ENCODE measurements at regions of chr9 and their contacts with region 1.

Region 1: GRCh38 chr9:21559424-21560280 is 77.5 kb upstream of the IFNE start:
- DNase-seq: peak; percentile 30 to 71 (median 53)
- ATAC-seq: peak; percentile 87
- H3K4me3 ChIP-seq: peak overlapping the region; percentile 74
- H3K4me3 Mint-ChIP-seq: peak overlapping the region; percentile 88 to 99 (median 96)
- H3K27ac ChIP-seq: peak overlapping the region; percentile 67
- H3K27ac Mint-ChIP-seq: peak overlapping the region in 8 of 9 donors; percentile 34 to 76 (median 70)
- H3K4me1 ChIP-seq: peaks cover 0 to 21% of the 10 kb centered on the region in 2 donors
- H3K4me1 Mint-ChIP-seq: peaks cover 17 to 53% (median 28%) of the 10 kb centered on the region in 7 donors
- H3K27me3 ChIP-seq: peaks cover 9 to 31% of the 10 kb centered on the region in 2 donors
- H3K27me3 Mint-ChIP-seq: peaks cover 4 to 64% (median 41%) of the 10 kb centered on the region in 5 donors

Region 2: GRCh38 chr9:21102305-21102704 is 457.3 kb before region 1 on chr9:
- CTCF ChIA-PET with region 1: no interaction called
- POLR2A ChIA-PET with region 1: no interaction called
- intact Hi-C with region 1: no loop called
- DNase-seq: no peak
- ATAC-seq: no peak
- H3K4me3 ChIP-seq: no peak overlapping the region
- H3K4me3 Mint-ChIP-seq: no peak overlapping the region
- H3K27ac ChIP-seq: no peak overlapping the region
- H3K27ac Mint-ChIP-seq: no peak overlapping the region
- H3K4me1 ChIP-seq: peaks cover 2 to 3% of the 10 kb centered on the region in 2 donors
- H3K4me1 Mint-ChIP-seq: peaks cover 6 to 9% (median 8%) of the 10 kb centered on the region in 7 donors
- H3K27me3 ChIP-seq: no peaks in the 10 kb centered on the region
- H3K27me3 Mint-ChIP-seq: peaks cover 3 to 19% (median 5%) of the 10 kb centered on the region in 5 donors

Region 3: DNA sequence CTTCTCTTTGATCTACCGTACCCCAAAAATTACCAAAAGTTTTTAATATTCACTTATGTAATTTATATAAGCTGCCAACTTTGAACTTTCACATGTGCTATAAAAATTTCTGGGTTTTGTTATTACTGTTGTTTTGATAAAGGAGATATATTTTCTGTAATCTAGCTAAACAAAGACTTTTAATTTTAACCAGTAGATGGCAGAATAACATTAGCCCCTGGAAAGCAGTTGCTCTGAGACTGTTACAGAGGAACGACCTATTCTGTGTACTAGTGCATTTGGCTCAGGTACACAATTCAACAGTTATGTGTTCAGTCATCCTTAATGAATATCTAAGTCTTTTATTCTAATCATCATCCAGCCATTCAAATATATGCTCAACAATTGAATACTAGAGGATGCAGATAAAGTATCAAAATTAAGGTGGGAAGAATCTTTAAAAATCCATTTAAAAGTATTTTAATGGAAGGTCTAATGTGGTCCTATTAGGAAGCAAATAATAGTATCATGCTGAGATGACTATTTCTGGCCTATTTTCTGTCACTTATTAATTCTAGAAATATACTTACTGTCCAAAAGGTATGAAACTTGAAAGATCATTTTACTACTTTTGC is 233.0 kb before region 1 on chr9:
- CTCF ChIA-PET with region 1: interaction called, 3 read pairs
- POLR2A ChIA-PET with region 1: no interaction called
- intact Hi-C with region 1: loop called in 1 of 2 experiments (anchors 5 kb)
- DNase-seq: peak in 7 of 9 donors; percentile 31 to 67 (median 56)
- ATAC-seq: peak; percentile 95
- H3K4me3 ChIP-seq: no peak overlapping the region
- H3K4me3 Mint-ChIP-seq: peak overlapping the region in 4 of 10 donors; percentile 17 to 62 (median 40)
- H3K27ac ChIP-seq: no peak overlapping the region
- H3K27ac Mint-ChIP-seq: peak overlapping the region in 3 of 9 donors; percentile 17 to 73 (median 35)
- H3K4me1 ChIP-seq: peaks cover 10 to 23% of the 10 kb centered on the region in 2 donors
- H3K4me1 Mint-ChIP-seq: peaks cover 32 to 67% (median 55%) of the 10 kb centered on the region in 7 donors
- H3K27me3 ChIP-seq: no peaks in the 10 kb centered on the region
- H3K27me3 Mint-ChIP-seq: no peaks in the 10 kb centered on the region

Region 4: DNA sequence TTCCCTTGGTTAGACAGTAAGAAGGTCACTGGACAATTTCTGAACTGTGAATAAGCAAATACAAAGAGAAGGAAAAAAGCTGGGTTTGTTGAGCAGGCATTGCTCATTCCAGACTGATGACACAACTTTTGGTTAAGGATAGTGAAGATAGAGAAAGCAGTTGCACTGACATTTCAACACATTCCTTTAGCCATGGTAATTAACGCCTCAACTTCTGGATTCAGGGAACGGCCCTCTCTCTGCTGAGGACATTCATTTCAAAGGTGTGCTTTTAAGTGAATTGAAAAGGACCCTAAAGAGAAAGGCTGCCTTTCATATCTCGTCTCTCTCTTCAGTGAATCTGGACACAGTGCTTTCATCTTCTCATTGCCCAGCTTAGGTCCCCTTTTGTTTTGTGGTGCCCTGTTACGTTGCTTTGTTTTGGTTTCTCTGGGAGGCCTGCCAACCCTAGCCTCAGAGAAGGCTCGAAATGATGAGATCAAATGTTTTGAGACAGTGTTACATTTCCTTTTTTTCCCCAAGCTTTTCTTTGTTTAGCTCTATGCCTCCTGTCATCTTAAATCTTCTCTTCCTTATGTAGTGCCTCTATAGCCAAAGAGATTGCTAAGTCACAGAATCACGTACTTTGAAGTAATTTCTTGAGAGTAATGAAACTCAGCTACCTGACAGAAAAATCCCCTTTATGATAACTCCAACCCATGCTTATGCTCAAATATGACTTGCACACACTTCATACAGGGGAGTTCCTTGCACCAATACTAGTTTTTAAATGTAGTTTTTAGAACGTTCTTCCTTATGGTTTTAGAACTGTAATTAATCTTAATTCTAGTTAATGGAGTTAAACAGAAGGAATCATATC is 16.9 kb after region 1 on chr9:
- CTCF ChIA-PET with region 1: interaction called, 6 read pairs
- POLR2A ChIA-PET with region 1: interaction called, 22 read pairs
- intact Hi-C with region 1: loop called (anchors 1 kb)
- DNase-seq: peak in 7 of 9 donors; percentile 44 to 80 (median 60)
- ATAC-seq: peak; percentile 69
- H3K4me3 ChIP-seq: no peak overlapping the region
- H3K4me3 Mint-ChIP-seq: peak overlapping the region; percentile 3 to 77 (median 58)
- H3K27ac ChIP-seq: peak overlapping the region; percentile 48
- H3K27ac Mint-ChIP-seq: peak overlapping the region; percentile 34 to 95 (median 87)
- H3K4me1 ChIP-seq: peaks cover 25 to 33% of the 10 kb centered on the region in 2 donors
- H3K4me1 Mint-ChIP-seq: peaks cover 23 to 51% (median 39%) of the 10 kb centered on the region in 7 donors
- H3K27me3 ChIP-seq: no peaks in the 10 kb centered on the region
- H3K27me3 Mint-ChIP-seq: peaks cover 0 to 34% (median 0%) of the 10 kb centered on the region in 5 donors

Region 5: DNA sequence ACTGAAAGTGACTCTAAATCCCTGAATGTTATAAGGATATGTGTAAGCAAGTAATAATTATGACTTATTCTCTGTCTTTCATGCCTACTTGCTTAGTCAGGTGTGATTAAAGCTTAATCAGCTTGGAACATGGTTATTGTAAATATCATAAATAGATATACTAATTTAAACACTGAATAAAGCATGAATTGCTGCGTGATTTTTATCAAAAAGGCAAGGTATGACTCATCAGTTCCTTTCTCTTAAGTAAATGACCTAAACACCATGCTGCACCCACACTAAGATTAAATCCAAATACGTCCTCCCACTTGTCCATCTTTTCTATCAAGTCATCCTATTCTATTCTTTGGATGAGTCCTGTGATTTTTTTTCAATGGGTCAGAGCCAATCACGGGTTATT is 118.2 kb after region 1 on chr9:
- CTCF ChIA-PET with region 1: no interaction called
- POLR2A ChIA-PET with region 1: no interaction called
- intact Hi-C with region 1: loop called (anchors 5 to 10 kb)
- DNase-seq: no peak
- ATAC-seq: no peak
- H3K4me3 ChIP-seq: no peak overlapping the region
- H3K4me3 Mint-ChIP-seq: no peak overlapping the region
- H3K27ac ChIP-seq: no peak overlapping the region
- H3K27ac Mint-ChIP-seq: no peak overlapping the region
- H3K4me1 ChIP-seq: no peaks in the 10 kb centered on the region
- H3K4me1 Mint-ChIP-seq: peaks cover 0 to 4% (median 2%) of the 10 kb centered on the region in 7 donors
- H3K27me3 ChIP-seq: no peaks in the 10 kb centered on the region
- H3K27me3 Mint-ChIP-seq: peaks cover 0 to 3% (median 0%) of the 10 kb centered on the region in 5 donors

Region 6: DNA sequence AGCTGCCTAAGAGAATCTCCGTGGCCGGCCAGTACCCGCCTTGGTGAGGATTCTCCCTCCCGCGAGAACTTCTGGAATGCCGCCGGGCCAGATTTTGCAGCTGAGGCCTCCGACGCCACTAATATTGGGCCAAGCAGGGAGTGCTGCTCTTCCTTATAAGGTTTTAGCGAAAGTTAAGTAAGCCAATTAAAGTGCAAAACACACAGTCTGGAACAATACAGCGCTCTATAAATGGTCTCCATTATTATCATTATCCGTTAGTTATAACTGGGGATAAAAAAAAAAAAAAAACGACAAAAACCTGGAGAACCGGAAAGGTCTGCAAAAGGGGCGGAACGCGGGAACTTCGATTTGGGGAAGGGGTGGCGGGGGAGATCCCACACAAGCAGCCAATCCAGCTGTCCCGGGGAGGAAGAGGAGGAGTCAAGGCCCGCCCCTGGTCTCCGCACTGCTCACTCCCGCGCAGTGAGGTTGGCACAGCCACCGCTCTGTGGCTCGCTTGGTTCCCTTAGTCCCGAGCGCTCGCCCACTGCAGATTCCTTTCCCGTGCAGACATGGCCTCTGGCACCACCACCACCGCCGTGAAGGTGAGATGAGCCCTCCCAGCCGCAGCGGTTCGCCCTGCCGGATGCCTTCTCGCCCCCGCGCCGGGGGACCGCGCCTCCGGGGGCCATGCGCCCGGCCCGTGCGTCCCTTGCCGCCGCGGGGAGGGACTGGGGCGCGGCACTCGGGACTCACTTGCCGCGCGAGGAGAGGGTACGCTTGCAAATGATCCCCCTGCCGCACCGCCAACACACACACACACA is 242.7 kb after region 1 on chr9 and contains the start of gene MTAP:
- CTCF ChIA-PET with region 1: no interaction called
- POLR2A ChIA-PET with region 1: interaction called, 3 read pairs
- intact Hi-C with region 1: loop called in 1 of 2 experiments (anchors 5 kb)
- DNase-seq: peak in 7 of 9 donors; percentile 46 to 81 (median 72)
- ATAC-seq: peak; percentile 88
- H3K4me3 ChIP-seq: peak within 1 kb of the TSS; percentile 92
- H3K4me3 Mint-ChIP-seq: peak within 1 kb of the TSS; percentile 96 to 100 (median 99)
- H3K27ac ChIP-seq: peak within 1 kb of the TSS; percentile 69
- H3K27ac Mint-ChIP-seq: peak within 1 kb of the TSS; percentile 92 to 99 (median 96)
- H3K4me1 ChIP-seq: peaks cover 10 to 25% of the 10 kb centered on the region in 2 donors
- H3K4me1 Mint-ChIP-seq: peaks cover 24 to 52% (median 40%) of the 10 kb centered on the region in 7 donors
- H3K27me3 ChIP-seq: peaks cover 0 to 4% of the 10 kb centered on the region in 2 donors
- H3K27me3 Mint-ChIP-seq: peaks cover 0 to 46% (median 8%) of the 10 kb centered on the region in 5 donors
- total RNA-seq, gene MTAP: 29.0 to 50.7 (median 43.2) TPM

Region 7: DNA sequence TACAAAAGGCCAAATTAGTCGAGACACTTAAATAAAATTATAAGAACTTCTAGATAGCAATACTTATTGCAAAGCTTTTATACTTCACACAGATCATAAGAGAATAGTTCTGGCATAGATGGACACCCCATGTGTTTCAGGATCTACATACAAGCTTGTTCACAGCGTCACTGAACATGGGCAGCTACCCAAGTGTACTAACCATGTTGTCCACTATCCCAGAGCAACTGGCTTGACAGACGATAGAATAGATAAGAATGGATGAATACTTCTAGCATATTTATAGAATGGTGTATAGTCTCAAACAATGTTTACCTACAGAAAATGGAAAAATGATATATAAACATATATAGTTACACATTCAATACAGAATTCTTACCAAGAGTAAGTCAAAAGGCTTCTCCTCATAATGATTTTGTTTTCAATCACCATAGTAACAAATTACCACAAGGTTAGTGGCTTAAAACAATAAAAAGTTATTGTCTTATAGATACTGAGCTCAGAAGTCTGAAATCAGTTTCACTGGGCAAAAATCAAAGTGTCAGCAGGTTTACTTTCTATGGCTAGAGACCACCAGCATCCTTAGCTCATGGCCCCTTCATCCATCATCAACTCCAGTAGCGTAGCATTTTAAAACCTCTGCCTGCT is 1333.7 kb after region 1 on chr9:
- CTCF ChIA-PET with region 1: no interaction called
- POLR2A ChIA-PET with region 1: no interaction called
- intact Hi-C with region 1: no loop called
- DNase-seq: no peak
- ATAC-seq: no peak
- H3K4me3 ChIP-seq: no peak overlapping the region
- H3K4me3 Mint-ChIP-seq: no peak overlapping the region
- H3K27ac ChIP-seq: no peak overlapping the region
- H3K27ac Mint-ChIP-seq: no peak overlapping the region
- H3K4me1 ChIP-seq: no peaks in the 10 kb centered on the region
- H3K4me1 Mint-ChIP-seq: no peaks in the 10 kb centered on the region
- H3K27me3 ChIP-seq: no peaks in the 10 kb centered on the region
- H3K27me3 Mint-ChIP-seq: no peaks in the 10 kb centered on the region

Measured in naive thymus-derived CD4-positive, alpha-beta T cell (primary cell).